Activated CD4-positive, alpha-beta memory T cell treated with anti-CD3 and anti-CD28 coated beads, Interleukin-2, amount 10 ng/mL, durations not matched to agents 7 days and 5 days (primary cell): ENCODE measurements at regions of chr19 and their contacts with region 1.

Region 1: DNA sequence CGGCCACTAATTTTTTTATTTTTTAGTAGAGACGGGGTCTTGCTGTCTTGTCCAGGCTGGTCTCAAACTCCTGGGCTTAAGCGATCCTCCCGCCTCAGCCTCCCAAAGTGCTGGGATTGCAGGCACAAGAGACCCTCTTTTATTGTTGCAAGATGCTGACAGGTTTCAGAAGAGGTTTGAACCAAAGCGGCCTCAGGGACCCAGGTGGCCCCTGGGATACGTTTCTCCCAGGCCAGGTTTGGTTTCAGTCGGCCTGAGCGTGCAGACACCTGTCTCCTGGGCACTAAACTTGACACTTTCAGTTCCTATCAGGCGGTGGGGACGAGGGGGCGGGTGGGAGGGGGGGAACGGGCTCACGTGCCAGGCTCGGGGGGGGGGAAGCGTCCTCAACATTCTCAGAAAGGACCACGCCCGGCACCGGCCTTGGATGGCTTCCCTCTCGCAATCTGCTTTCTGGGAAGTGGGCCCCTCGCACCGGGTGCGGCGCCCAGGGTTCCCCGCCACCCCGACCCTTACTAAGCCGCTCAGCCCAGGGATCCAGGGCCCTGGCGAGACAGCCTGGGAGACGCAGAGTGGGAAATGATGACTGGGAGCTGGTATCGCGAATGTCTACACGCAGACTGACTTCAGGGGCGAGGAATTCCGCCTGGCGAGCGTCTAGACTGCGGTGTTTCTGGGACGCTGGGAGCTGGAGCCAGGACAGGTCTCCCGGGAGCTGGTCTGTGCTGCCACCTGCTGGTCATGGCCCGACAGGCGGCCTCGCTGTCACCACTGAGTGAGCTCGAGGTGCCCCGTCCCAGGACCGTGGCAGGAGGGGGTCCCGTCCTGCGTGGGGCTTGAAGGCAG is 91.6 kb downstream of the GNG7 start:
- DNase-seq: peak; percentile 89
- H3K4me3 Mint-ChIP-seq: peak overlapping the region; percentile 77
- H3K27ac Mint-ChIP-seq: peak overlapping the region; percentile 42
- H3K4me1 Mint-ChIP-seq: peaks cover 39% of the 10 kb centered on the region
- H3K27me3 Mint-ChIP-seq: peaks cover 28% of the 10 kb centered on the region

Region 2: DNA sequence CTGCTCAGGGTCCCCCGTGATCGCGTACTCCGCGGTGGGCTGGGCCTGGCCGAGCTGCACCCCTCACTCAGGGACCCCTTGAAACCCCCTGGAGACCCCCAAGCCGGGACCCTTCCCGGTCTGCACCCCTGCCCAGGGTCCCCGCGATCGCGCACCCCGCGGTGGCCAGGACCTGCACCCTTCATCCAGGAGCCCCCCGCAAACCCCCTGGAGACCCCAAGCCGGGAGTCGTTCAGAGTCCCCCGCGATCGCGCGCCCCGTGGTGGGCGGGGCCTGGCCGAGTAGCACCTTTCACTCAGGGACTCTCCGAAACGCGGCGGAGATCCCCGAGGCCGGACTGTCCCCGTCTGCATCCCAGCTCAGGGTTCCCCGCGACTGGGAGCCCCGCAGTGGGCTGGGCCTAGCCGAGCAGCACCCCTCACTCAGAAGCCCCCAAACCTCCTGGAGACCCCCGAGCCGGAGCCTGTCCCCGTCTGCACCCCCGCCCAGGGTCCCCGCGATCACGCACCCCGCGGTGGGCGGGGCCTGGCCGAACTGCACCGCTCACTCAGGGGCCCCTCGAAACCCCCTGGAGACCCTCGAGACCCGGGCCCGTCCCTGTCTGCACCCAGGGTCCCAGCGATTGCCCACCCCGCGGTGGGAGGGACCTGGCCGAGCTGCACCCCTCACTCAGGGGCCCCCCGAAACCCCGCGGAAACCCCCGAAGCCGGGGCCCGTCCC is 154.8 kb before region 1 on chr19:
- CTCF ChIA-PET with region 1: interaction called, 24 read pairs
- POLR2A ChIA-PET with region 1: interaction called, 4 read pairs
- DNase-seq: peak; percentile 58
- H3K4me3 Mint-ChIP-seq: peak overlapping the region; percentile 80
- H3K27ac Mint-ChIP-seq: peak overlapping the region; percentile 81
- H3K4me1 Mint-ChIP-seq: peaks cover 29% of the 10 kb centered on the region
- H3K27me3 Mint-ChIP-seq: no peaks in the 10 kb centered on the region

Region 3: GRCh38 chr19:2543463-2544442 is 67.1 kb before region 1 on chr19:
- CTCF ChIA-PET with region 1: interaction called, 11 read pairs
- POLR2A ChIA-PET with region 1: no interaction called
- DNase-seq: peak; percentile 75
- H3K4me3 Mint-ChIP-seq: peak overlapping the region; percentile 57
- H3K27ac Mint-ChIP-seq: peak overlapping the region; percentile 81
- H3K4me1 Mint-ChIP-seq: peaks cover 35% of the 10 kb centered on the region
- H3K27me3 Mint-ChIP-seq: no peaks in the 10 kb centered on the region

Region 4: GRCh38 chr19:2627319-2627829 is 16.5 kb after region 1 on chr19:
- CTCF ChIA-PET with region 1: interaction called, 46 read pairs
- POLR2A ChIA-PET with region 1: interaction called, 4 read pairs
- DNase-seq: peak; percentile 46
- H3K4me3 Mint-ChIP-seq: no peak overlapping the region
- H3K27ac Mint-ChIP-seq: peak overlapping the region; percentile 64
- H3K4me1 Mint-ChIP-seq: peaks cover 21% of the 10 kb centered on the region
- H3K27me3 Mint-ChIP-seq: no peaks in the 10 kb centered on the region